CD8-positive, alpha-beta T cell (primary cell): ENCODE measurements at regions of chr16 and their contacts with region 1.

Region 1: GRCh38 chr16:30657866-30658730 is at the start of gene FBRS:
- DNase-seq: peak; percentile 99 to 100 (median 100)
- ATAC-seq: peak; percentile 75
- H3K4me3 ChIP-seq: peak within 1 kb of the TSS; percentile 61 to 91
- H3K4me3 Mint-ChIP-seq: peak within 1 kb of the TSS; percentile 98
- H3K27ac ChIP-seq: peak within 1 kb of the TSS; percentile 97 to 99
- H3K27ac Mint-ChIP-seq: peak within 1 kb of the TSS; percentile 100
- H3K4me1 ChIP-seq: peaks cover 36% of the 10 kb centered on the region
- H3K4me1 Mint-ChIP-seq: peaks cover 39% of the 10 kb centered on the region
- H3K27me3 ChIP-seq: no peaks in the 10 kb centered on the region
- H3K27me3 Mint-ChIP-seq: no peaks in the 10 kb centered on the region
- CTCF ChIP-seq: peak; percentile 66
- total RNA-seq, gene FBRS: 222 to 224 TPM

Region 2: DNA sequence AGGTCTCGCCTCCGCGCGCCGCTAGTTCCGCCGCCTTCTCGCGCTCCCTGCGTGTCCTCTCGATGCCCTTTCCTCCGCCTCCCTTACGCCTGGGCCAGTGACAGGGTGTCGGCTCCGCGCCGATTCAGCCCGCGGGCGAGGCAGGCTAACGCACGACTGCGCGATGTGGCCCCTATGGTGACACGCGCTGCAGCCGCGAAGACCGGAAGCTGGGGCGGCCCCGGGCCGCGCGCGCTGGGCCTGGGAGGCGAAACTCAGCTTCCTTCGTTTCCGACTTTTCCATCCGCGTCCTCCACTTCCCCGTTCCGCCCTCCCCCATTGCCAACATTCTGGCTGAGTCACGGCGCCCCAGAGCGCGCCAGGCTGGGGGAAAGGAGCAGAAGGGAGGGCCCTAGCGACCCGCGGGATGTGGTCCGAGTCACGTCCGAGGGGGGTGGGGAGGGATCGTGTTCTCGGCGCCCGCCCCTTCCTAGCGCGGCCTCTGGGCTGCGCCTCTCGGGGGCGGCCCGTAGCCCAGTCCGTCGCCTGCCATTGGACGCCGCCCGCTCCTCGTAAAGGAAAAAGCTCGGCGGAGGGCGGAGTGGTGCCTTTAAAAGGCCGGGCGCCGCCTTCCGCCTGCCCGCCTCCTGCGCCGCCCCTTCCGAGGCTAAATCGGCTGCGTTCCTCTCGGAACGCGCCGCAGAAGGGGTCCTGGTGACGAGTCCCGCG is 592.8 kb before region 1 on chr16 and contains the start of gene ALDOA:
- CTCF ChIA-PET with region 1: no interaction called
- POLR2A ChIA-PET with region 1: interaction called, 6 read pairs
- intact Hi-C with region 1: loop called (anchors 1 kb)
- DNase-seq: peak; percentile 82 to 97 (median 94)
- ATAC-seq: peak; percentile 82
- H3K4me3 ChIP-seq: peak within 1 kb of the TSS; percentile 94 to 99
- H3K4me3 Mint-ChIP-seq: peak within 1 kb of the TSS; percentile 98
- H3K27ac ChIP-seq: peak within 1 kb of the TSS; percentile 87 to 94
- H3K27ac Mint-ChIP-seq: peak within 1 kb of the TSS; percentile 98
- H3K4me1 ChIP-seq: peaks cover 48% of the 10 kb centered on the region
- H3K4me1 Mint-ChIP-seq: peaks cover 43% of the 10 kb centered on the region
- H3K27me3 ChIP-seq: no peaks in the 10 kb centered on the region
- H3K27me3 Mint-ChIP-seq: no peaks in the 10 kb centered on the region
- CTCF ChIP-seq: no peak
- total RNA-seq, gene ALDOA: 339 to 359 TPM

Region 3: DNA sequence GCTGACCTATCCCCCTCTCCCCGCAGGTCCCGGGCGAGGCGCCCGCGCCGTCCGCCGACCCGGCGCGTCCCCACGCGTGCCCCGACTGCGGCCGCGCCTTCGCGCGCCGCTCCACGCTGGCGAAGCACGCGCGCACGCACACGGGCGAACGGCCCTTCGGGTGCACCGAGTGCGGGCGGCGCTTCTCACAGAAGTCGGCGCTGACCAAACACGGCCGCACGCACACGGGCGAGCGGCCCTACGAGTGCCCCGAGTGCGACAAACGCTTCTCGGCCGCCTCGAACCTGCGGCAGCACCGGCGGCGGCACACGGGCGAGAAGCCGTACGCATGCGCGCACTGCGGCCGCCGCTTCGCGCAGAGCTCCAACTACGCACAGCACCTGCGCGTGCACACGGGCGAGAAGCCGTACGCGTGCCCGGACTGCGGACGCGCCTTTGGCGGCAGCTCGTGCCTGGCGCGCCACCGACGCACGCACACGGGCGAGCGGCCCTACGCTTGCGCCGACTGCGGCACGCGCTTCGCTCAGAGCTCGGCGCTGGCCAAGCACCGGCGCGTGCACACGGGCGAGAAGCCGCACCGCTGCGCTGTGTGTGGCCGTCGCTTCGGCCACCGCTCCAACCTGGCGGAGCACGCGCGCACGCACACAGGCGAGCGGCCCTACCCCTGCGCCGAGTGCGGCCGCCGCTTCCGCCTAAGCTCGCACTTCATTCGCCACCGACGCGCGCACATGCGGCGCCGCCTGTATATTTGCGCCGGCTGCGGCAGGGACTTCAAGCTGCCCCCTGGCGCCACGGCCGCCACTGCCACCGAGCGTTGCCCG is 240.4 kb before region 1 on chr16:
- CTCF ChIA-PET with region 1: no interaction called
- POLR2A ChIA-PET with region 1: interaction called, 11 read pairs
- intact Hi-C with region 1: no loop called
- DNase-seq: peak; percentile 78 to 98 (median 88)
- ATAC-seq: peak; percentile 87
- H3K4me3 ChIP-seq: peak overlapping the region; percentile 52 to 72
- H3K4me3 Mint-ChIP-seq: peak overlapping the region; percentile 74
- H3K27ac ChIP-seq: peak overlapping the region; percentile 81 to 91
- H3K27ac Mint-ChIP-seq: peak overlapping the region; percentile 77
- H3K4me1 ChIP-seq: peaks cover 18% of the 10 kb centered on the region
- H3K4me1 Mint-ChIP-seq: peaks cover 7% of the 10 kb centered on the region
- H3K27me3 ChIP-seq: no peaks in the 10 kb centered on the region
- H3K27me3 Mint-ChIP-seq: no peaks in the 10 kb centered on the region
- CTCF ChIP-seq: no peak

Region 4: DNA sequence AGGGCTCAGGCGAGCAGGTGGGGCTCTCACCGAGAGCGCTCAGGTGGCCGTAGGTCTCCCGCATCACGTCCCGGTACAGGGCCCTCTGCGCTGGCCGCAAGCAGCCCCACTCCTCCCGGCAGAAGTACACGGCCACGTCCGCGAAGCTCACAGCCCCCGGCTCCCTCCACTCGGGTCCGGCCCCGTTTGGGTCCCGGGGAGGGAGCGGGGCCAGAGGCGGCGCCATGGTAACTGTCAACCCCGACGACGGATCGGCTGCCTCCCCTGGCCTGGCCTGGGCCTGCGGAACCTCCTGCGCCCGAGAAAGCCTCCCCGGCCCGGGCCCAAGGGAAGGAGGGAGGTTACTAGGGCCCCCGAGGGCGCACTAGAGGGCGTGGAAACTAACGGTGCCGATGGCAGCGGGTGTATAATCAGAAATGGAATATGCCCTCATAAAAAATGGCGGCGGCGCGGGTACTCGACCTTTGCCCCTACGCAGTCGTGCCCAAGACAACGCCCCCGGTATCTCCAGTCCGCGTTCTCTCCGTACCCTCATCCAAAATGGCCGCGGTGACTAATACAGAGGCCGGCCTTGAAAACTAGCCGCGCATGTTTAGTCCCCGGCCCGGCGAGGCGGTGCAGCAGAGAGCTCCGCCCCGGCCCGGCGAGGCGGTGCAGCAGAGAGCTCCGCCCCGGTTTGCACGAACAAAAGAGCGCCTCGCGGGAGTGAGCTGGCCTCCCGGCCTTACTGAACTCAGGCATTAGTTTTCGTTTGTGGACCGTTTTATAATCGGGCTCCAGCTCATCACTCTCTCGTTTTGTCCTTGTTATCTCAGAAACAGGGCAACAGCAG is 99.9 kb before region 1 on chr16 and contains the start of gene ZNF764:
- CTCF ChIA-PET with region 1: no interaction called
- POLR2A ChIA-PET with region 1: interaction called, 10 read pairs
- intact Hi-C with region 1: loop called (anchors 1 kb)
- DNase-seq: peak; percentile 88 to 98 (median 96)
- ATAC-seq: peak; percentile 90
- H3K4me3 ChIP-seq: peak within 1 kb of the TSS; percentile 68 to 84
- H3K4me3 Mint-ChIP-seq: peak within 1 kb of the TSS; percentile 84
- H3K27ac ChIP-seq: peak within 1 kb of the TSS; percentile 80 to 88
- H3K27ac Mint-ChIP-seq: peak within 1 kb of the TSS; percentile 93
- H3K4me1 ChIP-seq: peaks cover 28% of the 10 kb centered on the region
- H3K4me1 Mint-ChIP-seq: peaks cover 35% of the 10 kb centered on the region
- H3K27me3 ChIP-seq: no peaks in the 10 kb centered on the region
- H3K27me3 Mint-ChIP-seq: no peaks in the 10 kb centered on the region
- CTCF ChIP-seq: no peak
- total RNA-seq, gene ZNF764: 15.0 to 15.6 TPM

Region 5: DNA sequence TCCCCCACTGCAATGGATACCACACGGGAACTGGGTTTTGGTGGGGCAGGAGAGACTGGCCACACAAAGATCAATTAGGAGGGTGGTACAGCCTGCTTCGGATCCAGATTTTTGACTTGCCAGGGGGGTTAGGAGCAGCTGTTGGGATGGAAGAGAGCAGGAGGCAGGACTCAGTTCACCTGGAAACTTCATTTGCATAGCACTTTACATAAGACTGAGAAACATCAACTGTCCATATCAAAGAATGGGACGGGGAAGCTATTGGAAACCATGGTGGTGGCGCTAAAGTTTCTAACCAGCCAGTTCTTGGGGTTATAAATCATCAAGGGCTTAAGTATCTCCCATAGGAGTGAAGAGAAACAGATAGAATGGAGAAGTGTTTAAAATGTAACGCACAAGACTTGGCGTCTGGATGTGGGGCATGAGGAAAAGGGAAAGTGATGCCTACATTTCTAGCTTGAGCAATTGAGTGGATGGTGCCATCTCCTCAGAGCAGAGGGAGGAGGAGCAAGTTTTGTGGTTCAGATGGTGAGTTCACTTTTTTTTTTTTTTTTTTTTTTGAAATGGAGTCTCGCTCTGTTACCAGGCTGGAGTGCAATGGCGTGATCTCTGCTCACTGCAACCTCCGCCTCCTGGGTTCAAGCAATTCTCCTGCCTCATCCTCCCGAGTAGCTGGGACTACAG is 34.4 kb after region 1 on chr16:
- CTCF ChIA-PET with region 1: interaction called, 73 read pairs
- POLR2A ChIA-PET with region 1: interaction called, 43 read pairs
- intact Hi-C with region 1: loop called (anchors 1 to 2 kb)
- DNase-seq: no peak
- ATAC-seq: no peak
- H3K4me3 ChIP-seq: no peak overlapping the region
- H3K4me3 Mint-ChIP-seq: no peak overlapping the region
- H3K27ac ChIP-seq: no peak overlapping the region
- H3K27ac Mint-ChIP-seq: no peak overlapping the region
- H3K4me1 ChIP-seq: peaks cover 7% of the 10 kb centered on the region
- H3K4me1 Mint-ChIP-seq: peaks cover 15% of the 10 kb centered on the region
- H3K27me3 ChIP-seq: no peaks in the 10 kb centered on the region
- H3K27me3 Mint-ChIP-seq: no peaks in the 10 kb centered on the region
- CTCF ChIP-seq: no peak

Region 6: DNA sequence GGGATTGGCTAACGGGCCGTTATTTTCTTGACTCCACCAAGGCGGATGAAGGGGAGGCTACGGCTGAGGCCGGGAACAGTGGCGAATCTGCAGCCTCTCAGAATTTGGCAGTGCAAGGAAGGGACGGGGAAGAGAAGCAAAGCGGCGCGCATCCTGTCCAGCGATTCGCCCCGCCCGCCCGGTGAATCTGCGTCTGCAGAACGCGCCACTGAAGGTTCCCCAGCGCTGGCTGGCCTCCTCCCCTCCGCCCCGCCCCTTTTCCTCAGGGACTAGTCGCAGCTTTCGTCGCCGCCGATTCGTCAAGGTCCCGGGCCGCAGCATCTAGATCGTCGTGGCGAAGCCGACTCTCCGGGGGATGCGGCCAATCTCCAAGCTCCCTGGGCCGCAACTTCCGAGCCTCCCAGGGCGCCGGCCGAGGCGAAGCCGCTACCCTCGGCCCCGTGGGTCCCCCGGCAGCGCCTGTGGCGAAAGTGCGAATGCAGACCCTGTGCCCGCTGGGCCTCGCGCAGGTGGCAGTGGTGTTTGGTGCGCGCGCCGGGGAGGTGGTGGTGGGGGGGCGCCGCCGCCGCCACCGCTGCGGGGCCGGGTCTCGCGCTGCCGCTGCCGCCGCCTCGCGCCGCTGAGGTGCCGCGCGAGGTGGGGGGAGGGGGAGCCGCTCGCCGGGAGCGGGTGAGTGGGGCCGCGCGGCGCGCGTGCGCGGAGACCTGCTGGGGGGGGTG is 299.5 kb after region 1 on chr16 and contains the start of gene SETD1A:
- CTCF ChIA-PET with region 1: no interaction called
- POLR2A ChIA-PET with region 1: no interaction called
- intact Hi-C with region 1: loop called in 1 of 2 experiments (anchors 1 kb)
- DNase-seq: peak; percentile 91 to 99 (median 98)
- ATAC-seq: peak; percentile 86
- H3K4me3 ChIP-seq: peak within 1 kb of the TSS; percentile 88 to 97
- H3K4me3 Mint-ChIP-seq: peak within 1 kb of the TSS; percentile 95
- H3K27ac ChIP-seq: peak within 1 kb of the TSS; percentile 93 to 98
- H3K27ac Mint-ChIP-seq: peak within 1 kb of the TSS; percentile 98
- H3K4me1 ChIP-seq: peaks cover 27% of the 10 kb centered on the region
- H3K4me1 Mint-ChIP-seq: peaks cover 31% of the 10 kb centered on the region
- H3K27me3 ChIP-seq: no peaks in the 10 kb centered on the region
- H3K27me3 Mint-ChIP-seq: no peaks in the 10 kb centered on the region
- CTCF ChIP-seq: no peak
- total RNA-seq, gene SETD1A: 43.6 to 48.3 TPM